ENCODE measurements at regions of chr11 and their contacts with region 1.

Region 1: DNA sequence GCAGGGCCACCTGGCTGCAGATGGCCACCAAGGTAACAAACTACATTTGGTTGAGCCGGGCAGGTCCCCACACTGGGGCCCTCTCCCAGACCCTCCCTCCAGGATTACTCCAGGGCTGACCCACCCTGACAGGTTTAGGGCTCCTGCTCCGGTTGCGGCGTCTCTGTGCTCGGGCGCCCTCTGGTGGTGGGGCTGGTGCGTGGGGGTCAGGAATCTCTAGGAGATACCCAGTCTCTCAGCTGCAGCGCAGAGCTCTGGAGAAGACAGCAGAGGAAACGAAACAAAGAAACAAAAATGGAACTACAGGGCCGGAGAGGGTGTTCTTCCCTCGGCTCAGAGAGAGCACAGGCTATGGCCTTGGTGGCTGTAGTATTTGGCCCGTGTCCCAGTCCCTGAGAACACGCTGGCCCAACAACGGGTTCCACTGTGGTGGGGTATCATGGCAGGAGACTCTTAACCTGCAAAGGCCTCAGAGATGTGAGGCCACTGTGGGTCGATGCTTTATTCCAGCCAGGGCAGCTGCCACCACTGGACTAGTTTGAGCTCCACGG is 2.4 kb downstream of the C11orf96 start:
- DNase-seq: peak; percentile 60 to 79
- ATAC-seq: peak; percentile 55 to 86
- H3K4me3 ChIP-seq: peak overlapping the region; percentile 51; the same call in 2 of the 3 replicates
- H3K27ac ChIP-seq: no peak overlapping the region
- H3K4me1 ChIP-seq: peaks cover 18% of the 10 kb centered on the region; the same call in 2 of the 3 replicates
- CTCF ChIP-seq: peak; percentile 91
- EP300 ChIP-seq: no peak
- POLR2A ChIP-seq: no peak
- RAD21 ChIP-seq: peak; percentile 71 to 75

Region 2: GRCh38 chr11:43788421-43788820 is 156.4 kb before region 1 on chr11:
- CTCF ChIA-PET with region 1: no interaction called
- POLR2A ChIA-PET with region 1: no interaction called
- DNase-seq: no peak
- ATAC-seq: no peak
- H3K4me3 ChIP-seq: no peak overlapping the region
- H3K27ac ChIP-seq: no peak overlapping the region
- H3K4me1 ChIP-seq: peaks cover 11% of the 10 kb centered on the region; the same call in 1 of the 3 replicates
- CTCF ChIP-seq: no peak
- EP300 ChIP-seq: no peak
- POLR2A ChIP-seq: no peak
- RAD21 ChIP-seq: no peak

Region 3: GRCh38 chr11:43880640-43881159 is 64.1 kb before region 1 on chr11 and contains the start of gene ALKBH3:
- CTCF ChIA-PET with region 1: interaction called, 10 read pairs
- POLR2A ChIA-PET with region 1: no interaction called
- DNase-seq: peak; percentile 70 to 97
- ATAC-seq: peak; percentile 99 to 100
- H3K4me3 ChIP-seq: peak within 1 kb of the TSS; percentile 82
- H3K27ac ChIP-seq: peak within 1 kb of the TSS; percentile 65 to 87
- H3K4me1 ChIP-seq: peaks cover 7% of the 10 kb centered on the region; the same call in 1 of the 3 replicates
- CTCF ChIP-seq: no peak
- EP300 ChIP-seq: no peak
- POLR2A ChIP-seq: peak; percentile 53
- RAD21 ChIP-seq: no peak
- polyA plus RNA-seq, gene ALKBH3: 48.7 and 50.2 TPM in 2 replicates

Region 4: GRCh38 chr11:43905813-43906241 is 39.0 kb before region 1 on chr11:
- CTCF ChIA-PET with region 1: interaction called, 18 read pairs
- POLR2A ChIA-PET with region 1: no interaction called
- DNase-seq: no peak
- ATAC-seq: no peak
- H3K4me3 ChIP-seq: no peak overlapping the region
- H3K27ac ChIP-seq: no peak overlapping the region
- H3K4me1 ChIP-seq: no peaks in the 10 kb centered on the region
- CTCF ChIP-seq: no peak
- EP300 ChIP-seq: no peak
- POLR2A ChIP-seq: no peak
- RAD21 ChIP-seq: no peak

Region 5: DNA sequence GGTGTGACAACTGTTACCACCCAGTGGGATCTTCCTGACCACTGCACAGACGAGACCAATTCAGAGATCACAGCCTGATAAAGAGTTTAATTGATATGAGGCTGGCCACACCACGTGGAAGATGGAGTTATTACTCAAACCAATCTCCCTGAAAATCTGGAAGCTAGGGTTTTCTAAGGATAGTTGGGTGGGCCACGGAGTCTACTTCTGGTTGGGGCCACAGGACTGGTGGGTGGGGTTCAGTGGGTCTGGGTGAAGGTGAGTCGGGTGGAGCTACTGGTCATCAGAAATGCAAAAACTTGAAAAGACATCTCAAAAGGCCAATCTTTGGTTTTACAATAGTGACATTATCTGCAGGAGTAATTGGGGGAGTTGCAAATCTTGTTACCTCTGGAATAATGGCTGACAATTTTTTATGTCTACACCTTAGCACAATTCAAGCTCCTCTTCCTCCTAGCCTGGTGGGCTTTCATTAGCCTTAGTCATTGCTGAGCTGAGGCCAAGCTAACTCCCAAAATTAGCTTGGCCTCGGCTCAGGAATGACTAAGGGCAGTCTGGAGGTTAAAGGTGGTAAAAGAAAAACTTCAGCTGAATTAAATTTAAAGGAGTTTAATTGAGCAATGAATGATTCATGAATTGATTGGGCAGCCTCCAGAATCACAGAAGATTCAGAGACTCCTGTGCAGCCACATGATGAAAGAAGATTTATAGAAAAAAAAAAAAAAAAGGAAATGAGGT is 10.7 kb after region 1 on chr11:
- CTCF ChIA-PET with region 1: interaction called, 45 read pairs
- POLR2A ChIA-PET with region 1: no interaction called
- DNase-seq: no peak
- ATAC-seq: no peak
- H3K4me3 ChIP-seq: no peak overlapping the region
- H3K27ac ChIP-seq: no peak overlapping the region
- H3K4me1 ChIP-seq: no peaks in the 10 kb centered on the region
- CTCF ChIP-seq: no peak
- EP300 ChIP-seq: no peak
- POLR2A ChIP-seq: no peak
- RAD21 ChIP-seq: no peak

Region 6: DNA sequence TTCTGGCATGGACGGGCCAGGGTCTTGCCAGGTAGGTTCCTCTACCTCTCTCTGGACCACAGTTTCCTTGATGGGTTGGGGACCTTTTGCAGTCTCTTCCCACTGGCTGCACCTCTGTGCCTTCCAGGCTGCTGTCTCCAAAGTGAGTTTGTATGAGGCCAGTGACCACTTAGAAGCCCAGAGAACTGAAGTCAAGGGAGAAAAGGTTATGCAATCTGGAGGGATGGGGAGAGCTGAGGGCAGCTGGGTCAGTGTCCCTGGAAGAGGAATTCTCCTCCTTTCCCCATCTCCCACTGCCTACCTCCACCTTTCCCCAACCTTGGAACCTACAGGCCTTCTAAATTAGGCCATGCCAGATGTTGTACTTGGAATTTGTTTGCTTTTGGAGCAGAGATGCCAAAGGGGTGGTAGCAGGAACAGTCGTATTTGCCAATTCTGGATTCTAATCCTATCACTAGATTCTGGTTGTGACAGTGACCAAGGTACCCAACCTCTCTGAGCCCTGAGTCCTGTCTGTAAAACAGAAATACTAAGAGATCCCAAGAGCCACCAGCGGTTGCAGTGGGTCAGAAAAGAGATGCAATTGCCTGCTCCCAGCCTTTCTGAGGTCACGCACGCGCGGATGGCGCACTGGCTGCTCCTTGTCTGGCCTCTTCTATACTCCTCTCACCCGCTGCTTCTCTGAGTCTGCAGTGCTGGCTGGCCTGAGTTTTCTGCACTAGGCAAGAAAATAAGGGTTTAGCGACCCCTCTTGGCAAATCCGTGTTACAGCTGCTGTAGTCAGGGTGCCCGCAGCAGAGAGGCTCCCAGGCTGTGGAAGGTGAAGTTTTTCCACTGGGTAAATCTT is 92.2 kb after region 1 on chr11:
- CTCF ChIA-PET with region 1: interaction called, 54 read pairs
- POLR2A ChIA-PET with region 1: no interaction called
- DNase-seq: peak; percentile 54 to 72
- ATAC-seq: peak; percentile 90 to 98
- H3K4me3 ChIP-seq: no peak overlapping the region
- H3K27ac ChIP-seq: no peak overlapping the region
- H3K4me1 ChIP-seq: no peaks in the 10 kb centered on the region
- CTCF ChIP-seq: peak; percentile 66
- EP300 ChIP-seq: no peak
- POLR2A ChIP-seq: no peak
- RAD21 ChIP-seq: peak; percentile 85 to 89